Activated CD4-positive, alpha-beta T cell treated with anti-CD3 and anti-CD28 coated beads for 36 hours (primary cell): ENCODE measurements at regions of chr9 and their contacts with region 1.

Region 1: DNA sequence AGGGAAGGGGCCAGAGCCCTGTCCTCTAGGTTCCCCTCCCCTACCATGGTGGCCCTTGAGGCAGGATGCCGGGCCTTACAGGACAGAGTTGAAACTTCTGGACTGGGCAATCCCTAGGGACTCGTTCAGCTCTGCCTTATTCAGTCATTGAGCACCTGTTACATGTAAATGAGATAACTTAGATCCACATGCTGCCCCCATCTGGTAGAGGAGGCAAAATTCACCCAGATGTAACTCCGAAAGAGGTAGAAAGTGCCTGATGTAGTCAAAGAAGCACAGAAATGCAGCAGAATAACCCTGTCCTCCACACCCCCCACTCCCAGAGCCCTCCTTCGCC is 1.5 kb downstream of the GGTA1 start:
- DNase-seq: peak; percentile 66
- ATAC-seq: peak; percentile 82
- H3K4me3 Mint-ChIP-seq: peak overlapping the region; percentile 53
- H3K27ac Mint-ChIP-seq: no peak overlapping the region
- H3K4me1 Mint-ChIP-seq: peaks cover 17% of the 10 kb centered on the region
- H3K27me3 Mint-ChIP-seq: peaks cover 53% of the 10 kb centered on the region

Region 2: GRCh38 chr9:121445981-121446380 is 52.1 kb before region 1 on chr9:
- CTCF ChIA-PET with region 1: interaction called, 3 read pairs
- POLR2A ChIA-PET with region 1: no interaction called
- intact Hi-C with region 1: loop called in 1 of 2 experiments (anchors 1 kb)
- DNase-seq: peak; percentile 34
- ATAC-seq: peak; percentile 73
- H3K4me3 Mint-ChIP-seq: no peak overlapping the region
- H3K27ac Mint-ChIP-seq: no peak overlapping the region
- H3K4me1 Mint-ChIP-seq: peaks cover 8% of the 10 kb centered on the region
- H3K27me3 Mint-ChIP-seq: peaks cover 17% of the 10 kb centered on the region

Region 3: DNA sequence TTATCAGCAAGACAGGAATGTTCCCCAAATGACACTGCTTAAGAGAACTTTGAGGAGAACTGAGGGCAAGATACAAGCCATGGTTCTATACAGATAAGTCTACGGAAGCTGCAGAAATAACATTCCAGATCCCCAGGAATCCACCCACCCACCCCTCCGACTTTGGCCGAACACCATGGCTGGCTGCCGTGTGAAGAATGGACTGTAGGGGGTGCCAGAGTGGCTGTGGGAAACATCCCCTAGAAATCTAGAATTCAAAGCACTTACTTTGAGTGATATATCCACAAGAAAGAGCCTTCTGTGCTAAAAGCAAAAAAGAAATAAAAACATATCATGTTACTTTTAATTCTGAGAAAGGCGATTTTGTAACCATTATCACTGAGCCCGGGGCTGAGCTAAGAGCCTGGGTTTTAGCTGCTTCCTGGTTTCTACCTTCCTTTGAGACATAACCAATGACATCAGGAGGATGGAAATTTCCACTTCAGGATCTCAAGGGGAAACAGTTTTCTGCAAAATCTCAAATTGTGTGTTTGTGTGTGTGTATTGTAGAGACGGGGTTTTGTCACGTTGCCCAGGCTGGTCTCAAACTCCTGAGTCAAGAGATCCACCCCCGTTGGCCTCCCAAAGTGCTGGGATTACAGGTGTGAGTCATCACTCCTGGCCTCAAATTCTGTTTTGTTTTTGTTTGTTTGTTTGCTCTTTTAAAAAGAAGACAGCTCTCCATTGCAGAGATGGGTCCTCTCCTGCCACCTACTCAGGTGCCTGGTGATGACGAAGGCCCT is 34.9 kb before region 1 on chr9:
- CTCF ChIA-PET with region 1: interaction called, 8 read pairs
- POLR2A ChIA-PET with region 1: no interaction called
- intact Hi-C with region 1: loop called in 1 of 2 experiments (anchors 1 kb)
- DNase-seq: peak; percentile 63
- ATAC-seq: peak; percentile 42
- H3K4me3 Mint-ChIP-seq: no peak overlapping the region
- H3K27ac Mint-ChIP-seq: no peak overlapping the region
- H3K4me1 Mint-ChIP-seq: peaks cover 5% of the 10 kb centered on the region
- H3K27me3 Mint-ChIP-seq: peaks cover 22% of the 10 kb centered on the region

Region 4: DNA sequence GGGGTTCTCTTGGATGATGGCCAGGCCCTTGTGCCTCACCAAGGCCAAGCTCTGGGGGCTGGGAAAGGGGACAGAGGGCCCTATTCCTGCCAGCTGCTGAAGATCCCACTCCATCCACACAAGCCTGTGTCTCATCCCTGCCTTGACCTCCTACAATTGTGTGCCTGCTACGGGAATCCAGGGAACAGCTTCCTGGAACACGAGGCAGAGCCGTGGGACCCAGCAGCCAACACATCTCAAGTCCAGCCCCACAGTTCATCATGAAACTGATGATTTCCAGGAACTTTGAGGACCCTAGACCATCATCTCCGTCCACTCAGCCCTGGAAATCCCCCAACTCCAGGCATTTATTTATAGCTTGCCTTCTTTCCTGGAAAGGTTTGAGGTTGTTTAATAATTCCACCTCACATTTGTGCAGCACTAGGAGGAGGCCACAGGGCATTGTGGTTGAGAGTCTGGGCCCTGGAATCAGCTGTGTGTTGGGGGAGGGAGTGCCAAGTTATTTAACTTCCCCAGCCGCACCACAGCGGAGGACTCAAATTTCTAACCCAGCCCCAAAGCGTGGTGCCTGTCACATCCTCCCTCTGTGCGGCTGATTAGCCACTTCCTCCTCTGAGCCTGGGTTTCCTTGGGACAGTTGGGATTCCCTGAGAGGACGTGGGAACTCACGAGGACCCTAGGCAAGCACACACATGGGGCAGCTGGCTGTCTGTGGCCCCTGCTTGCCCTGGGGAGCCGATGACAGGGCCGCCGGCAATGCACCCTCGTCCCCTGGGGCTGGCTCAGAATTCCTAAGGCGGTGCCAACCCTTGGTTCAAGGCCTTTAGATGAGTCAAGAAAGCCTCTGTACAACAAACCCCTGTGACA is 59.7 kb after region 1 on chr9:
- CTCF ChIA-PET with region 1: no interaction called
- POLR2A ChIA-PET with region 1: no interaction called
- intact Hi-C with region 1: no loop called
- DNase-seq: peak; percentile 50
- ATAC-seq: peak; percentile 63
- H3K4me3 Mint-ChIP-seq: no peak overlapping the region
- H3K27ac Mint-ChIP-seq: no peak overlapping the region
- H3K4me1 Mint-ChIP-seq: peaks cover 5% of the 10 kb centered on the region
- H3K27me3 Mint-ChIP-seq: no peaks in the 10 kb centered on the region